Esophagus muscularis mucosa (tissue), 4 donors: ENCODE measurements at regions of chr6 and their contacts with region 1.

Region 1: GRCh38 chr6:12011276-12012076 is 636 bp upstream of the HIVEP1 start:
- DNase-seq: peak; percentile 100
- H3K4me3 ChIP-seq: peak overlapping the region; percentile 80 to 87 (median 85)
- H3K27ac ChIP-seq: peak overlapping the region; percentile 90 to 98 (median 95)
- H3K4me1 ChIP-seq: peaks cover 15 to 49% (median 37%) of the 10 kb centered on the region in 4 donors
- H3K27me3 ChIP-seq: no peaks in the 10 kb centered on the region
- CTCF ChIP-seq: no peak
- EP300 ChIP-seq: peak; percentile 37
- POLR2A ChIP-seq: no peak

Region 2: DNA sequence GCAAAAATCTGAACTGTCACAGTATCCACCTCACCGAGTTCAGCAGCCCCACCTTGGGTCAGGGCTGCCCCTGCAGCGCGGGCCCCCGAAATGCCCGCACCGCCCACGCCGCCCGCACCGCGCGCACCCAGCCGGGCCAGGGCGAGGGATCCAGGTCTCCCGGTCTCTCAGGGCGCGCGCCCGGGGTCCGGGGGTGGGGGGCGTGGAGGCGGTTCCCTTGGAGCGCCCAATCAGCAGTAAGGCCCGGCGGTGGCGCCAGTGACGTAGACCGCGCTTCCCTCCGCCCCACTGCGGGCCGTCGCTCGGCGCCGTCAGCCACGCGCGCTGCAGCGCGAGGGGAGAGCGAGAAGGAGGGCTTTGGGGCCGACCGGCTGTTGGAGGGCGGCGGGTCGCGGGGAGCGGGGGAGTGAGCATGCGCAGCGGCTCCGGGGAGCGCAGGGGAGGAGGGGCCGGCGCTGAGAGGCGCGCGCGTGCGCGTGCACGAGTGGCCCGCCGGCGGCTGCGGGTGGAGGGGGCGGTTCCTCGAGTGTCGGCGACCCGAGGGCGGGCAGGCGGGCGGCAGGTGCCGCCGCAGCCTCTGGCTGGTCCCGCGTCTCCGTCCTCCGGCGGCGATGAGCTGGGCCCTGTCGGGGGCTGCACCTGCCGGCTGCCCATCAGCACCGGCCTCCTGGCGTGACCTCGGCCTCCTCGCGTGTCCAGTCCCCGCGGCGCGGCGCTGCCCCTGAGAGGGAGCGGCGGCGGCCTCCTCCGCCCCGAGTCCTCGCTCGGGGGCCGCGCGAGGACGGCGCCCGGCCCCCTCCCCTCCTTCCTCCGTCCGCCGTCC is 474.0 kb before region 1 on chr6 and contains the start of gene TMEM170B:
- intact Hi-C with region 1: loop called (anchors 5 kb)
- DNase-seq: peak; percentile 96
- H3K4me3 ChIP-seq: peak within 1 kb of the TSS; percentile 92 to 100 (median 96)
- H3K27ac ChIP-seq: peak within 1 kb of the TSS; percentile 80 to 88 (median 86)
- H3K4me1 ChIP-seq: peaks cover 5 to 27% (median 20%) of the 10 kb centered on the region in 4 donors
- H3K27me3 ChIP-seq: no peaks in the 10 kb centered on the region
- CTCF ChIP-seq: no peak
- EP300 ChIP-seq: no peak
- POLR2A ChIP-seq: peak; percentile 25
- total RNA-seq, gene TMEM170B: 5.4 to 8.6 (median 6.2) TPM

Region 3: DNA sequence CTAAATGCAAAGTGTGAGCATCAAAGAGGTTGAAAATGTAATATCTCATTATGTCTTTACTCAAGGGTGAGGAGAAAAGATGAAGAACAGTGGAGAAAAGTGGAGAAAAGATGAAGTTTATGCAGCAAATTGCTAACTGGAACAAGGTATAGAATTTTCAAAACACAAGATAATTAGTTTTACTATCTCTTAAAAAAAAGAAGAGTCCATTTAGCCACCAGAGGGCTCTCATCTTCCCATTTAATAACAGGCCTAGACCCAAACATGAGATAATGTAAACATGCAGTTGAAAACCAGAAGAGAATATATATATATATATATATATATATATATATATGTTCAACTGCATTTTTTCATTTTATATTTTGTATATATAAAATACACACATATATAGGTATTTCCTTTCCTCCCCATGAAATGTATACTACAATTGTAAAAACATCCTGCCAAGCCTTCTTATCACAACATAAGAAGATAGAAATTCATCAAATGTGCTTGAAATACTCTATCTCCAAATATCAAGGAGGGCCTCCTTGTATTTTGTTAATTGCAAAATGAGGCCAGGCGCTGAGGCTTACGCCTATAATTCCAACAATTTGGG is 311.3 kb before region 1 on chr6:
- intact Hi-C with region 1: loop called (anchors 10 kb)
- DNase-seq: no peak
- H3K4me3 ChIP-seq: no peak overlapping the region
- H3K27ac ChIP-seq: no peak overlapping the region
- H3K4me1 ChIP-seq: peaks cover 0 to 9% (median 0%) of the 10 kb centered on the region in 4 donors
- H3K27me3 ChIP-seq: no peaks in the 10 kb centered on the region
- CTCF ChIP-seq: peak; percentile 39 to 58 (median 55)
- EP300 ChIP-seq: no peak
- POLR2A ChIP-seq: no peak

Region 4: GRCh38 chr6:11762794-11763459 is 248.5 kb before region 1 on chr6:
- intact Hi-C with region 1: loop called (anchors 5 kb)
- DNase-seq: no peak
- H3K4me3 ChIP-seq: peak overlapping the region in 1 of 4 donors; percentile 18
- H3K27ac ChIP-seq: peak overlapping the region; percentile 69 to 81 (median 78)
- H3K4me1 ChIP-seq: peaks cover 23 to 52% (median 42%) of the 10 kb centered on the region in 4 donors
- H3K27me3 ChIP-seq: no peaks in the 10 kb centered on the region
- CTCF ChIP-seq: no peak
- EP300 ChIP-seq: no peak
- POLR2A ChIP-seq: no peak

Region 5: GRCh38 chr6:11975353-11975977 is 36.0 kb before region 1 on chr6:
- intact Hi-C with region 1: no loop called
- DNase-seq: no peak
- H3K4me3 ChIP-seq: no peak overlapping the region
- H3K27ac ChIP-seq: no peak overlapping the region
- H3K4me1 ChIP-seq: peaks cover 0 to 10% (median 7%) of the 10 kb centered on the region in 4 donors
- H3K27me3 ChIP-seq: no peaks in the 10 kb centered on the region
- CTCF ChIP-seq: no peak
- EP300 ChIP-seq: no peak
- POLR2A ChIP-seq: no peak

Region 6: DNA sequence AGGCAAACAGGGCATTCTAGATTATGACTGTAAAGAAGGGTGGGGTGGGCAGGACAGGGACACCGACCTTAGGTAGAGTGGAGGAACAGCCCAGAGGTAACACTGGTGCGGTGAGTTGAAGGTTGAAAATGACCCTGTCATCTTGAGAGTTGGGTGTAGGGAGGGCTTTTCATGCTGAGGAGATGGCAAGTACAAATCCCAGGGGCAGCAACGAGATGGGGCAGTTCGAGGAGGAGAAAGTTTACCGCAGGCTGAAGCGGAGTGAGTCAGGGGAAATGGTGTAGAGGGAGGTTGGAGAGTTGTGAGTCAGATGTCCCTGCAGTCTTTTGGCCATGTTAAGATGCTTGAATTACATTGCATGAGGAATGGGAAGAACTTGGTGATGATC is 101.7 kb after region 1 on chr6:
- intact Hi-C with region 1: no loop called
- DNase-seq: no peak
- H3K4me3 ChIP-seq: no peak overlapping the region
- H3K27ac ChIP-seq: no peak overlapping the region
- H3K4me1 ChIP-seq: no peaks in the 10 kb centered on the region
- H3K27me3 ChIP-seq: no peaks in the 10 kb centered on the region
- CTCF ChIP-seq: no peak
- EP300 ChIP-seq: no peak
- POLR2A ChIP-seq: no peak

Region 7: GRCh38 chr6:12383448-12383847 is 372.0 kb after region 1 on chr6:
- intact Hi-C with region 1: no loop called
- DNase-seq: no peak
- H3K4me3 ChIP-seq: no peak overlapping the region
- H3K27ac ChIP-seq: no peak overlapping the region
- H3K4me1 ChIP-seq: no peaks in the 10 kb centered on the region
- H3K27me3 ChIP-seq: no peaks in the 10 kb centered on the region
- CTCF ChIP-seq: no peak
- EP300 ChIP-seq: no peak
- POLR2A ChIP-seq: no peak